Endothelial cell of umbilical vein (primary cell): ENCODE measurements at regions of chr15 and their contacts with region 1.

Region 1: GRCh38 chr15:38996111-38996631 is 431.6 kb upstream of the RASGRP1 start:
- DNase-seq: peak; percentile 96
- H3K4me3 ChIP-seq: no peak overlapping the region
- H3K27ac ChIP-seq: peak overlapping the region; percentile 92
- H3K4me1 ChIP-seq: peaks cover 51% of the 10 kb centered on the region
- H3K27me3 ChIP-seq: no peaks in the 10 kb centered on the region
- CTCF ChIP-seq: no peak
- POLR2A ChIP-seq: peak; percentile 35

Region 2: GRCh38 chr15:38817427-38818156 is 178.6 kb before region 1 on chr15:
- CTCF ChIA-PET with region 1: interaction called, 53 read pairs
- POLR2A ChIA-PET with region 1: no interaction called
- dilution Hi-C with region 1: no loop called
- intact Hi-C with region 1: loop called (anchors 1 kb)
- DNase-seq: peak; percentile 86
- H3K4me3 ChIP-seq: no peak overlapping the region
- H3K27ac ChIP-seq: peak overlapping the region; percentile 36
- H3K4me1 ChIP-seq: peaks cover 17% of the 10 kb centered on the region
- H3K27me3 ChIP-seq: no peaks in the 10 kb centered on the region
- CTCF ChIP-seq: peak; percentile 98 to 99
- POLR2A ChIP-seq: no peak

Region 3: DNA sequence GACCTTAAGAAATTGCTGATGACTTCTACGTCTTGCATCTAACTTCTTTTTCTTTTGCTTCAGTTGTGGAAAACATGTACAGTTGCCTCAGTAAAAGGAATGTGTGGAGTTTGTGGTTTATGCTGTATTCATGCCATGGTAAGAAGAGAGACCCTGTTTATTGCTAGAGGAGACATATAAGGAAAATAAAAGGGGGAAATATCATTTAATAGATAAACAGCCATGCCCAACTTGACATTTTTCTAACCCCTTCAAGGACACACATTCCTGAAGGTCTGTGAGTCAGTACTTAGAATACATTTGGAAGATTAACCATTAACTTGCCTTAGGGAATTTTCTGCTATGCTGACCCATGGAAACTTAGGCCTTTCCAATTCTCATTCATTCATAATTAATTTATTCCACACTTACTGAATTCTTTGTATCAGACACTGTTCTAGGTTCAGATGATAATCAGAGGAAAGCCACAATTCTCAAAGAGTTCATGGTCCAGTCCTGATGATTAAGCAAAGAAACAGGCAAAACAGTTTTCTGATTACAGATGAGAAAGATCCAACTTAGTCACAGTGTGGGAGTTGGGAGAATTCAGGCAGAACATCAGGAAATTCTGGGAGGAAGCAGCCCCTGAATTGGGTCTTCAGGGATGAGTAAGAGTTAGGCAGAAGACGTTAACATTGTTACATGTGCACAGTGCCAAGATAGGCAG is 101.8 kb before region 1 on chr15:
- CTCF ChIA-PET with region 1: interaction called, 12 read pairs
- POLR2A ChIA-PET with region 1: interaction called, 3 read pairs
- dilution Hi-C with region 1: no loop called
- intact Hi-C with region 1: loop called (anchors 1 kb)
- DNase-seq: peak; percentile 91
- H3K4me3 ChIP-seq: no peak overlapping the region
- H3K27ac ChIP-seq: peak overlapping the region; percentile 92
- H3K4me1 ChIP-seq: peaks cover 49% of the 10 kb centered on the region
- H3K27me3 ChIP-seq: no peaks in the 10 kb centered on the region
- CTCF ChIP-seq: no peak
- POLR2A ChIP-seq: no peak

Region 4: DNA sequence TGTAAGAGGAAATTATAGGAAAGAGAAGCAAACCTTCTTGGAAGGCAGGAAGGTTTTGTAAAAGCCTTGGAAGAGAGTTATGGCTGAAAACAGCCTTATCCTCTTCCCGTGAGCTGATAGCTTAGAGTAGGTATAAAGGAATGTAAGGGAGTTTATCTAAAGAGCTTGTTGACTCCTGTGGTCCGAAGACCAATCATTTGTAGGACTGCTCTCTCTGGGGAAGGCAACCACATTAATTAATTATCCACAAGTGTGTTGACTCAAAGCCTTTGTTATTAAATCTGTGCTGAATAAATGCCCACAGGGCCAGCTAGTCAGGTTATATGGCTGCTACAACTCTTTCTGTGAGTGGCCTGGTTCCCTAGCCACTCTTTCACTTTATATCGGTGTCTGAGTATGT is 20.5 kb after region 1 on chr15:
- CTCF ChIA-PET with region 1: no interaction called
- POLR2A ChIA-PET with region 1: no interaction called
- dilution Hi-C with region 1: no loop called
- intact Hi-C with region 1: no loop called
- DNase-seq: no peak
- H3K4me3 ChIP-seq: no peak overlapping the region
- H3K27ac ChIP-seq: no peak overlapping the region
- H3K4me1 ChIP-seq: peaks cover 4% of the 10 kb centered on the region
- H3K27me3 ChIP-seq: no peaks in the 10 kb centered on the region
- CTCF ChIP-seq: no peak
- POLR2A ChIP-seq: no peak

Region 5: DNA sequence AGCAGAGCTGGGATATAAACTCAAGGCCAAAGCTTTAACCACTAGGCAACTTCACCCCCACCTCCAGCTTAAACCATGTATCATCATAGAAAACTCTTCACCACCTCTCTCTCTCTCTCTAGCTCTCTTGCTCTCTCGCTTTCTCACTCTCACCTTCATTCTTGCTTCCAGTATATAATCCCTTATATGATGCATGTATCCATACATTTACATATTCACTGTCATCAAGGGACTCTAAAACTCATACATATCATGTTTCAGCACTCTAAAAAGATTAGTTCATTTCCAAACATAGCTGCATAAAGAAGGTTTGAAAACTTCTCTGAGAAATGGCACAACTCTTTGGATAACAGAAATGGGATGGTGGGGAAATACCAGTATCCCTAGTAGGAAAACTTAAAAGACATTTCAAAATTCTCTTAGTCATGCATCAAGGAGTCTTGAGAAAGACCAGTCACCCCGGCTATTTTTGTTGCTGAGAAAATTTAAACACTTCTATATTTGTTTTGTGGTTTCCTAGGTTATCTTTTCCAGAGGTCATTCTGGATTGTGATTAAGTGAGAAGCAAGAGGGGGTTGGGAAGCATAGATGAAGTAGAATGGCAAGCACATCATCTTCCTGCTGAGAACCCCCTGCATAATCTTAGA is 136.9 kb after region 1 on chr15:
- CTCF ChIA-PET with region 1: interaction called, 11 read pairs
- POLR2A ChIA-PET with region 1: interaction called, 12 read pairs
- dilution Hi-C with region 1: no loop called
- intact Hi-C with region 1: loop called (anchors 1 kb)
- DNase-seq: peak; percentile 64
- H3K4me3 ChIP-seq: no peak overlapping the region
- H3K27ac ChIP-seq: peak overlapping the region; percentile 48
- H3K4me1 ChIP-seq: peaks cover 53% of the 10 kb centered on the region
- H3K27me3 ChIP-seq: no peaks in the 10 kb centered on the region
- CTCF ChIP-seq: no peak
- POLR2A ChIP-seq: no peak

Region 6: DNA sequence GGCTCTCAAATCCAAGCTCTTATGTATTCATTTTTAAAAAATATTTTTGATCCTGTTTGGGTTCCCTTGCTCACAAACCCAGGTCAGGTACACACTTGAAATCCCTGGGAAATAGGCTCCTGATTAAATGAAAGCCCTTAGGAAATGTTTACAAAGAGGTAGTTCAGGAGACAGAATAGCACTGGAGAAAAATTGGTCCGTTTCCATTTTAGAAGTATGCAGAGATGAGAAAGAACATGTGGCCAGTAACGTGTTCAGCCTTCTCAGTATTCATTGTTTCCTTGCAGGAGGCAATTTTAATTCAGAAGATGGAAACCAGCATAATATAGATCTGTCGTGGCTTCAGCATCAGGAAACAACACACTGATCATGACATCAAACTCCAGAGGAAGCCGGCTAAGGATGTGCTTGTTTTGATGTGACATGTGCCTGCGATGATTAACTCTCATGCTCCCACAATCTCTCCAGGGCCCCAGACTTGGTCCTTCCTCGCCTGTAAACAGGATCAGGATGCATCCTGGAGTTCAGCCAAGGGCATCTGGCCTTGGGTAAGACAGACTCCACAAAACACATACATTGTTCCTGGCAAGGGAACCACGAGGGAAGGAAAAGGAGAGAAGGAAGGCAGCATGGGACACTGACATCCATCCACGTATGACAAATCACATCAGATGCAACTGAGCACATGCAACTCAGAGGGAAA is 234.2 kb after region 1 on chr15:
- CTCF ChIA-PET with region 1: no interaction called
- POLR2A ChIA-PET with region 1: no interaction called
- dilution Hi-C with region 1: no loop called
- intact Hi-C with region 1: loop called (anchors 1 kb)
- DNase-seq: peak; percentile 100
- H3K4me3 ChIP-seq: no peak overlapping the region
- H3K27ac ChIP-seq: peak overlapping the region; percentile 93
- H3K4me1 ChIP-seq: peaks cover 49% of the 10 kb centered on the region
- H3K27me3 ChIP-seq: no peaks in the 10 kb centered on the region
- CTCF ChIP-seq: no peak
- POLR2A ChIP-seq: no peak